Heart right ventricle (tissue), 16 donors: ENCODE measurements at regions of chr16 and their contacts with region 1.

Region 1: GRCh38 chr16:29700253-29700987 is 21.4 kb downstream of the QPRT start:
- DNase-seq: peak; percentile 74 to 77
- ATAC-seq: peak; percentile 62 to 89 (median 86)
- H3K4me3 ChIP-seq: no peak overlapping the region
- H3K27ac ChIP-seq: no peak overlapping the region
- H3K4me1 ChIP-seq: peaks cover 0 to 19% (median 0%) of the 10 kb centered on the region in 9 donors
- H3K27me3 ChIP-seq: no peaks in the 10 kb centered on the region
- CTCF ChIP-seq: peak; percentile 85 to 94 (median 88)

Region 2: DNA sequence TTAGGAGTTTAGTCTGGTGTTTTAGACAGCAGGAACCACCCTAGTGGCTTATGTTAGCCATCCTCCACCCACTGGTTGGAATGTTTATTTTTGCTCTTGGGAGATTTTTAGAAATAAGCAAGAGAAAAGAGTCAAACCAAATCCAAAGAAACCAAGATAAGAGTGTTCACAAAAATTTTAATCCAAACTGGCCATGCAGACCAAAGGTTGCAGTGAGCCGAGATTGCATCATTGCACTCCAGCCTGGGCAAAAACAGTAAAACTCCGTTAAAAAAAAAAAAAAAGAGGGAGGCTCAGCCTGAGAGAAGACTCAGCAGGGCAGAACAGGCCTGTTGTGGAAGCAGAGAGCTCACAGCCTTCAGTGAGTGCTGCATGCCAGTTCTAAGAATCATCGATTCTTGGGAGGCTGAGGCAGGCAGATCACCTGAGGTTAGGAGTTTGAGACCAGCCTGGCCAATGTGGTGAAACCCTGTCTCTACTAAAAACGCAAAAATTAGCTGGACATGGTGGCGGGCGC is 57.6 kb after region 1 on chr16:
- intact Hi-C with region 1: no loop called
- DNase-seq: no peak
- ATAC-seq: peak in 3 of 8 donors; percentile 17 to 75 (median 72)
- H3K4me3 ChIP-seq: no peak overlapping the region
- H3K27ac ChIP-seq: no peak overlapping the region
- H3K4me1 ChIP-seq: no peaks in the 10 kb centered on the region
- H3K27me3 ChIP-seq: peaks cover 0 to 3% (median 0%) of the 10 kb centered on the region in 7 donors
- CTCF ChIP-seq: no peak

Region 3: DNA sequence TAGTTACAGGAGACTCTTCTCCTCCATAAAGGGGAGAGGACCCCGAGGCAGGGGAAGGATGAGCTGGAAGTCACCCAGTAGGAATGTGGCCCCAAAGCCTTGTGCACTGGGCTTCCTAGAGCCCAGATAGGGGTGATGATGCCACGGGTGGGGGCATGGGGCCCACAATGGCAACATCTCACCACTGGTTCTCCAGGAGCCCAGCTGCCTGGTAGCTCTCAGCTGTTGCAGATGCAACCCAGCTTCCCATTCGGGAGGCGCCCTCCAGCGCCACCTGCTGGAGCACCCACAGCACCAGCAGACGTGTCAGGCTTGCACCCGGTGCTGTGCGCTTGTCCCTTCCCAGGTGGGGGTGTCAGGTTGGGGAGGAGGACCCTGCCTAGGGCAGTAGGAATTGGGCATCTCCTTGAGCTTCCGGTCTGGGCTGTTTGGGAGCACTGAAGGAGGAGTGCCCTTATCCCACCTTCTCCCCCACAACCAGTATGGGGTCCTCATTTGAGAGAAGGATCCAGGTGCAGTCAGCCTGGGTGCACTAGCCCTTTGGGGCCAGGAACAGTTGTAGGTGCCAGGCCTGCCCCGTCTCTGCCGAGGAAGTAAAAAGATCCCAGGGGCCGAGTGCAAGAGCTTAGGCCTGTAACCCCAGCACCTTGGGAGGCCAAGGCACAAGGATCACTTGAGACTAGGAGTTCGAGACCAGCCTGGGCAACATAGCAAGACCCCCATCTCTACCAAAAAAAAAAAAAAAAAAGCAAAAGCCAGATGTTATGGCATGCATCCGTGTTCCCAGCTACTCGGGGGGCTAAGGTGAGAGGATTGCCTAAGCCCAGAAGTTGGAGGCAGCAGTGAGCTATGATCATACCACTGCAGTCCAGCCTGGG is 148.2 kb after region 1 on chr16:
- intact Hi-C with region 1: loop called in 8 of 10 experiments (anchors 1 to 10 kb)
- DNase-seq: peak; percentile 68 to 86
- ATAC-seq: peak; percentile 70 to 82 (median 76)
- H3K4me3 ChIP-seq: no peak overlapping the region
- H3K27ac ChIP-seq: peak overlapping the region in 1 of 10 donors; percentile 16
- H3K4me1 ChIP-seq: peaks cover 0 to 20% (median 0%) of the 10 kb centered on the region in 9 donors
- H3K27me3 ChIP-seq: no peaks in the 10 kb centered on the region
- CTCF ChIP-seq: peak; percentile 86 to 96 (median 91)

Region 4: DNA sequence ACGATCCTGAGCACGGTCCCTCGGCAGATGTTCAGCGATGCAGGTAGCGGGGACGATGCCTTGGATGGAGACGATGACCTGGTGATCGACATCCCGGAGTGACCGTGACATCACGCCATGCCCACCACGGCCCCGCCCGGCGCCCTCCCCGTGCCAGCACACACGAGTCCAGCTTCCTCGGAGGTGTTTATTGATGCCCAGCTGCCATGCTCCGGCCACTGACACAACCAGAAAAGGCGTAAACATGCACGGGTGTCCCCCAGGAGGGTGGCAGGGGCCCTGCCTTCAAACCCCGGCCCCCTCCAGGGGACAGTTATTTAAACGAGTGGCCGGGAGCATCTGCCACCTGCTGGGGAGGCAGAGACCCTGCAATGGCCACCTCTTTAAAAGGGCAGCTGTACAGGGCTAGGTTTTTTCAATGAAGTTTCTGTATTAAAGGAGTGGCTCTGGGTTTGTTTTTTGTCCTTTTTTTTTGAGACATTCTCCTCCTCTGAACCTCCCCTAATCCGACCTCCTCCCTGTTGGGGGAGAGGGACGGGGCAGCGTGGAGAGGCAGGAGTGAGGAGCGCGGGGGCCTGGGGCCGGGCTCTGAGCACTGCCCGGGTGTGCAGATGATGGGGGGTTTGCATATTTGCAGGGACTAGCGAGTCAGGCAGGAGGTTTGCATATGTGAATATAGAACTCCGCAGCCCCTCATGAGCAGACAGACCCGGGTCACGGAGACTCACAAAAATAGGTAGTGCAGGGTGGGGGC is 305.1 kb after region 1 on chr16:
- intact Hi-C with region 1: loop called in 2 of 10 experiments (anchors 10 kb)
- DNase-seq: no peak
- ATAC-seq: peak in 7 of 8 donors; percentile 42 to 73 (median 66)
- H3K4me3 ChIP-seq: no peak overlapping the region
- H3K27ac ChIP-seq: no peak overlapping the region
- H3K4me1 ChIP-seq: peaks cover 0 to 13% (median 4%) of the 10 kb centered on the region in 9 donors
- H3K27me3 ChIP-seq: peaks cover 13 to 28% (median 25%) of the 10 kb centered on the region in 7 donors
- CTCF ChIP-seq: peak; percentile 77 to 88 (median 84)

Region 5: GRCh38 chr16:30028438-30029076 is 328.1 kb after region 1 on chr16:
- intact Hi-C with region 1: loop called in 9 of 10 experiments (anchors 5 to 10 kb)
- DNase-seq: no peak
- ATAC-seq: peak in 4 of 8 donors; percentile 37 to 65 (median 54)
- H3K4me3 ChIP-seq: no peak overlapping the region
- H3K27ac ChIP-seq: no peak overlapping the region
- H3K4me1 ChIP-seq: peaks cover 0 to 10% (median 6%) of the 10 kb centered on the region in 9 donors
- H3K27me3 ChIP-seq: peaks cover 4 to 83% (median 74%) of the 10 kb centered on the region in 7 donors
- CTCF ChIP-seq: no peak

Region 6: GRCh38 chr16:31440516-31441184 is 1740.2 kb after region 1 on chr16:
- intact Hi-C with region 1: no loop called
- DNase-seq: no peak
- ATAC-seq: no peak
- H3K4me3 ChIP-seq: no peak overlapping the region
- H3K27ac ChIP-seq: peak overlapping the region in 5 of 10 donors; percentile 8 to 93 (median 30)
- H3K4me1 ChIP-seq: peaks cover 0 to 37% (median 12%) of the 10 kb centered on the region in 9 donors
- H3K27me3 ChIP-seq: no peaks in the 10 kb centered on the region
- CTCF ChIP-seq: no peak